Activated naive CD4-positive, alpha-beta T cell treated with anti-CD3 and anti-CD28 coated beads for 36 hours (primary cell): ENCODE measurements at regions of chr1 and their contacts with region 1.

Region 1: GRCh38 chr1:223531742-223532341 is 133.7 kb downstream of the CAPN8 start:
- DNase-seq: peak; percentile 81
- H3K4me3 Mint-ChIP-seq: no peak overlapping the region
- H3K27ac Mint-ChIP-seq: no peak overlapping the region
- H3K4me1 Mint-ChIP-seq: peaks cover 5% of the 10 kb centered on the region
- H3K27me3 Mint-ChIP-seq: no peaks in the 10 kb centered on the region

Region 2: DNA sequence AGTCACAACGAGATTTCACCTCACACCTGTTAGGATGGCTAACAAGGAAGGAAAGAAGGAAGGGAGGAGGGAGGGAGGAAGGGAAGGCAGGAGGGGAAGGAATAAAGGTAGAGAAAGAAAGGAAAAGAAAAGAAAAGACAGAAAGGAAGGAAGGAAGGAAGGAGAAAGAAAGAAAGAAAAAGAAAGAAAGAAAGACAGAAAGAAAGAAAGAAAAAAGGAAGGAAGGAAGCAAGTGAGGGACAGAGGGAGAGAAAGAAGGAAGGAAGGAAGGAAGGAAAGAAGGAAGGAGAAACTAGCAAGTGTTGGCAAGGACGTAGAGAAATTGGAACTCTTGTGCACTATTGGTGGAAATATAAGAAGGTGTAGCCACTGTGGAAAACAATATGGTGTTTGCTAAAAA is 86.4 kb before region 1 on chr1:
- CTCF ChIA-PET with region 1: no interaction called
- intact Hi-C with region 1: no loop called
- DNase-seq: no peak
- H3K4me3 Mint-ChIP-seq: no peak overlapping the region
- H3K27ac Mint-ChIP-seq: no peak overlapping the region
- H3K4me1 Mint-ChIP-seq: no peaks in the 10 kb centered on the region
- H3K27me3 Mint-ChIP-seq: peaks cover 1% of the 10 kb centered on the region

Region 3: DNA sequence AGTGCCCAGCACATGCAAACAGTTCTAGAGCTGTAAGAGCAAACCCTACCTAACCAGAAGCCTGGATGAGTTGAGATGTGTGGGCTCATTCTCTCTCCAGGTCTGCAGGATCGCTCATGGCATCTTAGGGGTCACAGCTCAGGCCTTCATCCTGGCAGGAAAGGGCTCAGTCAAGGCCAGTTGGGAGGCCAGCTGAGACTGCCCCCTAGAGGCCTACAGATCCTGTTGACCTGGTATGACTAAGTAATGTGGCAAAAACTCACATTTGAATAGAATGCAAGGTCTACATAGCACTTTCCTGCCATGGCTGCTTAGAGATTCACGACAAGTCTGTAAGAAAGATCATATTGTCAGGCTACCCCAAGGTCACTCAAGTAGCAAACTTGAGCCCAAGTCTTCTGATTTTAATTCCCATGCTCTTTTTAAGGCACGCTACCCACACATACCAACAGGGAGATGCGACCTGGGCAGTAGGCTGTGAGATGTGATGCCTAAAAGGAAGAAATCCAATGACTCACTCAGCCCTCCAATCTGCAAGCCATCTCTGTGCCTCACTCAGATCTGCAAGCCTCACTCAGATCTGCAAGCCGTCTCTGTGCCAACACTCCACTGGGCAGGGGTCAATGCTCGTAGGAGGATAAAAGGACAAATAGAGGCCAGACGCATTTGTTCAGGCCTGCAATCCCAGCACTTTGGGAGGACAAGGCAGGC is 138.8 kb after region 1 on chr1:
- CTCF ChIA-PET with region 1: no interaction called
- intact Hi-C with region 1: loop called (anchors 2 kb)
- DNase-seq: peak; percentile 41
- H3K4me3 Mint-ChIP-seq: no peak overlapping the region
- H3K27ac Mint-ChIP-seq: no peak overlapping the region
- H3K4me1 Mint-ChIP-seq: no peaks in the 10 kb centered on the region
- H3K27me3 Mint-ChIP-seq: no peaks in the 10 kb centered on the region

Region 4: GRCh38 chr1:223695941-223696340 is 164.1 kb after region 1 on chr1:
- CTCF ChIA-PET with region 1: interaction called, 4 read pairs
- intact Hi-C with region 1: loop called (anchors 2 kb)
- DNase-seq: no peak
- H3K4me3 Mint-ChIP-seq: no peak overlapping the region
- H3K27ac Mint-ChIP-seq: no peak overlapping the region
- H3K4me1 Mint-ChIP-seq: peaks cover 7% of the 10 kb centered on the region
- H3K27me3 Mint-ChIP-seq: no peaks in the 10 kb centered on the region